ENCODE measurements at regions of chr22 and their contacts with region 1.

Region 1: DNA sequence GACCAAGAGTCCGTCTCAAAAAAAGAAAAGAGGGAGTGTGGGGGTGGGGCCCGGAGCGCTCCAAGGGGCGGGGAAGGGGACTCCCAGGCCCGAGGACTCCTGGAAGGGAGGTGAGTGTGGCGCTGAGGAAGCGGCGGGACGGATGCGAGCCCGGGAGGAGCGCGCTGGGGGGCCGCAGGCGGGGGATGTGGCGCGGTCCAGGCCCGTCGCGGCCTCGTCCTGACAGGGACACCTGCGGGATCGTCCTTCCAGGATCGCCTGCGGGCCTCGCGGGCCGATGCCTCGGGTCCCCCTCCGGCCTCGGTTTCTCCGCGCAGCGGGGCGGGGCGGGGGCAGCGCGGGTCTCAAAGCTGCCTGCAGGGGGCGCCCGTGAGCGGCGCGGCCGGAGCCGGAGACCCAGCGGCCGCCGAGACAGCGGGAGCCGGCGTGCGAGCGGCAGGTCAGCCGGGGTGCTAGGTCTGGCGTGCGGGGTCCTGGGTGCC is 3.8 kb upstream of the ADORA2A start:
- DNase-seq: peak; percentile 95
- CTCF ChIP-seq: peak; percentile 85

Region 2: DNA sequence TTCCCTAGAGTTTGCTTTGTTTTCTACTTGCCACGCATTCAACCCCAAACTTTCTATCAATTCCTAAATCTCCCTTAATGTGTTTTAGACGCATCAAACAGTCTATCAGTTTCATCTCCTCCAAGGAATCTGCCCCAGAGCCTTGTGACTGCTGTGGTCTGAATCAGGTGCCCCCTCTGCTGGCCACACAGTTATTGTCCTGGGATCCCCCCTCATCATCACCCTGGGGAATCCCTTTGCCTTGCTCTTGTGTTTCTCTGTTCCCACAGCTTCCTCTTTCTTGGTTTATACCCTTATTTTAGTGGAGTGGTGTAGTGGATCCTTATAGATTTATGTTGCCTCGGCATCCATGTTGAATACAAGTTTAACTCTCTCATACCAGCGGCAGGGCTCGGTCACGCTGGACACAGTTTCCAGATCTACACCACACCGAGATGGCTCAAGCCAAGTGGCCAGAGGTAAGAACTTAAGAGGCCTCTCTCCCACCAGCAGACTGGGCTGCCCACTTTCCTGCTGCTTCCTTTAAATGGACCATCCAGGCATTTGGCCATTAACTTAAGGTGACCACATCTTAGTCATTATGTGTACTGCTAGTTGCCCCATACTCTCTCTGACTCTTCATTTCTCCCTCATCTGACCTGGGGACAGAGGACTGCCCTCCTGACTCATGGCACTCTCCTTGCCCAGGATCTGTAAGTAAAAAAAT is 79.7 kb after region 1 on chr22:
- in situ Hi-C with region 1: loop called (anchors 10 kb)
- DNase-seq: peak; percentile 85
- CTCF ChIP-seq: peak; percentile 79

Measured in GM13977 (cell line).